GM10248 (cell line): ENCODE measurements at regions of chr3 and their contacts with region 1.

Region 1: GRCh38 chr3:136042608-136043221 is 77.2 kb downstream of the PPP2R3A start:
- DNase-seq: peak; percentile 38
- CTCF ChIP-seq: peak; percentile 38

Region 2: GRCh38 chr3:134794950-134795745 is 1247.6 kb before region 1 on chr3 and contains the start of gene EPHB1:
- CTCF ChIA-PET with region 1: interaction called, 20 read pairs
- POLR2A ChIA-PET with region 1: no interaction called
- DNase-seq: peak; percentile 85
- CTCF ChIP-seq: peak; percentile 82

Region 3: GRCh38 chr3:135918580-135918962 is 124.1 kb before region 1 on chr3:
- CTCF ChIA-PET with region 1: interaction called, 16 read pairs
- POLR2A ChIA-PET with region 1: no interaction called
- DNase-seq: no peak
- CTCF ChIP-seq: no peak

Region 4: DNA sequence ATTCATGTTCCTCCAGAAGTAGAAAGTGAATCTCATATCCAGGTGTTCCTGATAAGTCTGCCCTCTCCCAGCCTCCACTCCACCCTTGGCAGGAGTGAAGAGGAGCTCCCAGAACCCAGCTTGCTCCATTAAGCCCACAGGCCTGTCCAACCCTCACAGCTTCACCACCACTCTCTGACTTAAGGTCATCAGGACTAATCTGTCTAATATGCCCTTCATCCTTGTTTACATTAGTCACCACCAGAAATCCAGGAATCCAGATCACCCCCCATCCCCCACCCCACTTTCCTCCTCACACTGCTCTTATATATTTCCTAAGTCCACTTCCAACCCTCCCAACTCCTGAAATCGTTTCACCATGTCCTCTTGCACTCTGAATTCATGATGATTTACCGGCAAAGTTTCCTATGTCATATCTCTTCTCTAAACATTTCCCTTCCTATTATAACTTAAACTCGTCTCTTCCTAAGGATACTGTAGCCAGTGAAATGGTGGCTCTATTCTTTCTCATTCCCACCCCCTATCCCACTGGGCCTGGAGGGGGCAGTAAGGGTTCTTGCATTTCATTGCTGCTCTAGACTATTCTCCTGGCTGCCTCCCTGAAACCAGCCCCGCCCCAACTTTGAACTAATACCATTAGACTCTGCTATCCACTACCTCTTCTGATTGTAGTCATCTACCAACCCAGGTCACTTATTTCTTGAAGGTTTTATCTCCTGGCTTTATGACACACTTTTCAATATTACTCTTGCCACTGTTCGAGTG is 33.8 kb before region 1 on chr3:
- CTCF ChIA-PET with region 1: no interaction called
- POLR2A ChIA-PET with region 1: no interaction called
- DNase-seq: no peak
- CTCF ChIP-seq: no peak

Region 5: DNA sequence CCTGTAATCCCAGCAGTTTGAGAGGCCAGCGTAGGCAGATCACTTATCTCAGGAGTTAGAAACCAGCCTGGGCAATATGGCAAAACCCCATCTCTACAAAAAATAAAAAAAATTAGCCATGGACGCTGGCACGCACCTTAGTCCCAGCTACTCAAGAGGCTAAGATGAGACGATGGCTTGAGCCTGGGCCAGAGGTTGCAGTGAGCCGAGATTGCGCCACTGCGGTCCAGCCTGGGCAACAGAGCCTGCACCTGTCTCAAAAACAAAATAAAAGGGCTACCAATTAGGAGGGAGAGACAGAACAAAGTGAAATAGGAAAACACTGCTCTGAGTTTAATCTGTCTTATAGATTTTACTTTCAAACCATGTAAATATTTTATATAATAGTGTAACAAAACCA is 119.6 kb after region 1 on chr3:
- CTCF ChIA-PET with region 1: no interaction called
- POLR2A ChIA-PET with region 1: no interaction called
- DNase-seq: no peak
- CTCF ChIP-seq: no peak